ENCODE measurements at regions of chr12 and their contacts with region 1.

Region 1: DNA sequence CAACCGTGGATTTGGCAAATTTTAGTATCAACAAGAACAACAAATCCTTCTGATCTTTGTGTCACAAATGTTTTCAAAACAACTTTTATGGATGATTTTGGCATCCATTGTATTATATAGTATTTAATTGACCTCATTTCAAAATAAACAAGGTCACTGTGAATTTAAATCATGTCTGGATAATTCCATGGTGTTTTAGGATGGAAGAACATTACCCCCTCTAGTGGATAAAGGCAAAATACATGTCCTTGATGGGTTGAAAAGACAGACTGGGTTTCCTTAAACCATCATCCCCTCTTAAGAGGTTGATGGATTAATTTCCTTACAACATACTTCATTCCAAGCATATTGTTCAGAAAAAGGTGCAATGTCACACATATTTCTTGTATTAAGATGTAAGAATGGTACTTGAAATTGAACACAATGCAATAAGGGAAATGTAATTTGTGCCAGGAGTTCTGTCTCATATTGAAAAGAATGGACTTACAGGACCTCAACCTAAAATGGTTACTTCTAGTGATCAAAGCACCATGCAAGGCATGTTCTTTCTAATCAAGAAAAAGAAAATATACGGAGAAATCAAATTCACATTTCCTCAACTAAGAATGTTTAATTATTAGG is 352.0 kb downstream of the BCAT1 start:
- DNase-seq: no peak
- H3K4me3 Mint-ChIP-seq: no peak overlapping the region
- H3K27ac Mint-ChIP-seq: no peak overlapping the region
- H3K4me1 Mint-ChIP-seq: peaks cover 2% of the 10 kb centered on the region
- H3K27me3 Mint-ChIP-seq: peaks cover 8% of the 10 kb centered on the region

Region 2: GRCh38 chr12:24561882-24562760 is 34.8 kb before region 1 on chr12:
- intact Hi-C with region 1: loop called (anchors 5 kb)
- DNase-seq: peak; percentile 66
- H3K4me3 Mint-ChIP-seq: peak overlapping the region; percentile 93
- H3K27ac Mint-ChIP-seq: peak overlapping the region; percentile 82
- H3K4me1 Mint-ChIP-seq: peaks cover 18% of the 10 kb centered on the region
- H3K27me3 Mint-ChIP-seq: peaks cover 62% of the 10 kb centered on the region

Region 3: DNA sequence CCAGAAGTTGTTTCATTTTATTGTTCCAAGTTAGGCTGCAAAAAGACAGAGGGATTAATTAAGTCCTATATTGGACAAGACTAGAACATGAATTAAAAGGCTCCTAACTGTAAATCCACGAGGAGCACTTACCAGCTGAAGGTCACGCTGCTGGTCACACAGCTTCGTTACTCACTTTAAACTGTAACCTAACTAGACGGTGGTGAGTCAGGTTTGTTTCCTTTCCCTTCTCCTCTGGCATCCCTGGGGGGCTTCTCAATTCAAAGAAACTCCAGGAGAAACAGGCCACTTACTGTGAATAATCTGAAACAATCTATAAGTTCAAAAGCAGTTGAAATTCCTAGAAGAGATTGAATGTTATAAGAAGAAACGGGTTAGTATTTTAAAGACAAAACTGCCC is 20.6 kb after region 1 on chr12:
- intact Hi-C with region 1: no loop called
- DNase-seq: no peak
- H3K4me3 Mint-ChIP-seq: no peak overlapping the region
- H3K27ac Mint-ChIP-seq: no peak overlapping the region
- H3K4me1 Mint-ChIP-seq: no peaks in the 10 kb centered on the region
- H3K27me3 Mint-ChIP-seq: no peaks in the 10 kb centered on the region

Region 4: DNA sequence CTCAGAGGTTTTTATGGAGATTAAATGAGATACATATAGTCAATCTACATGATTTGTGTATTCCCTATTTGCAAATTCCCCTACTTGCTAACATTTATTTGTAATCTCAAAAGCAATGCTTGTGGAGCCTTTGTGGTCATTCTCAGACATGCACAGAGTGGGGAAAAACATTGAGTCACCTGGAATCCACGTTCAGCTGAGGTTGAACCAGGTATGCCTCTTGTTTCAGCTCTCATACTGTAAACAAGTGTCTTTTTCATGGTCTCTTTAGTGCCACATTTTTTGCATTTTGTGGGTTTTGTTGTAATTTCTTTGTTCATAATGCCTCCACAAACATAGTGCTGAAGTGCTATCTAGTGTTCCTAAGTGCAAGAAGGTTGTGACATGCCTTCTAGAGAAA is 170.1 kb after region 1 on chr12:
- intact Hi-C with region 1: loop called (anchors 2 kb)
- DNase-seq: no peak
- H3K4me3 Mint-ChIP-seq: no peak overlapping the region
- H3K27ac Mint-ChIP-seq: peak overlapping the region; percentile 55
- H3K4me1 Mint-ChIP-seq: peaks cover 4% of the 10 kb centered on the region
- H3K27me3 Mint-ChIP-seq: no peaks in the 10 kb centered on the region